Panc1 (cell line): ENCODE measurements at regions of chr2 and their contacts with region 1.

Region 1: DNA sequence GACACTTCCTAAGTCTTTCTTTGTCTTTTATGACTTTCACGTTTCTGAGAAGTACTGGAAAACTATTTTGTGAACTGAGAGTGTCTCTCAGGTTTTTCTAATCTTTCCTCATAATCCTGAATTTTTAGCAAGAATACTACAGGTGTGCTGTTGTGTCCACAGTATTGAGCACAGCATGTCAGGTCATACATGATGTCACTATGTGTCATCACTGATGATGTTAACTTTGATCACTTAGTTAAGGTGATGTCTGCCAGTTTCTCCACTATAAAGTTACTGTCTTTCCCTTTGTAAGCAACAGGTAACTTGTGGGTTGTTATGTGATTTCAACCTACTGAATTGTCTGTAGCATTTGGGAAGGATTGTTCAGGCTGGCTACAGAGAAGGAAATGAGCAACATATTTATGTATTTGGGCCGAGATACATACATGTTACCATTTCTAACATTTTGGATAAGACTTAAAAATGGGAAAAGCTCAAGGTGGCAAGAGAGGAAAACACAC is 11.1 kb downstream of the MATN3 start:
- DNase-seq: no peak
- ATAC-seq: no peak
- H3K4me3 ChIP-seq: no peak overlapping the region
- H3K27ac ChIP-seq: no peak overlapping the region
- H3K4me1 ChIP-seq: no peaks in the 10 kb centered on the region
- H3K27me3 ChIP-seq: no peaks in the 10 kb centered on the region
- CTCF ChIP-seq: no peak

Region 2: DNA sequence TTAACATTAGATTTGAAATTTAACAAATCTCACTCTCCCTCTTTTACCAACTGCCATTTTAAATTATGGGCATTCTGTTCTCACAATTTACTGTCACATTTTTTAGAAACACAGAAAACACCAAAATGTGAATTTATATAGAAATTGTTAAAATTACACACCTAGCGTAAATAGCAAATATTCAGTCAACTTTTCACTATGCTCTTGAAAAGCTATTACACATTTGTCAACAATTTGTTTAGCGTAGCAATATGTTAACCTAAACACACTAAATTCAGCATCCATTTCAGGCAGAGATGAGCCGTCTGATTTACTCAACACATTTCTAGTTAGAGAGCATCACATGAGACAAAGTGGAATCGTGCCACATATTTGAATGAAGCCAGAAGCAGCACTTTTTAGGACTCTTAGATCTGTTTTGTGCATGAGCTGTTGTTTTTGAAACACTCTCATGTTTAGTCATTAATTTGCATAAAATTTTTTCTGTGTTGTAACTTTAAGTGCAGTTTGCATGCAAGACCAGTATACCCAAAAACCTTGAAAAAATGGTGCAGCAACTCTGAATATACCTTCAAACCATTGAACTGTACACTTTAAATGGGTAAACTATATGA is 107.8 kb before region 1 on chr2:
- CTCF ChIA-PET with region 1: no interaction called
- POLR2A ChIA-PET with region 1: no interaction called
- in situ Hi-C with region 1: no loop called
- intact Hi-C with region 1: no loop called
- DNase-seq: no peak
- ATAC-seq: no peak
- H3K4me3 ChIP-seq: no peak overlapping the region
- H3K27ac ChIP-seq: no peak overlapping the region
- H3K4me1 ChIP-seq: peaks cover 23% of the 10 kb centered on the region
- H3K27me3 ChIP-seq: no peaks in the 10 kb centered on the region
- CTCF ChIP-seq: no peak

Region 3: GRCh38 chr2:19911799-19912509 is 89.5 kb before region 1 on chr2:
- CTCF ChIA-PET with region 1: no interaction called
- POLR2A ChIA-PET with region 1: no interaction called
- in situ Hi-C with region 1: no loop called
- intact Hi-C with region 1: no loop called
- DNase-seq: peak; percentile 96
- ATAC-seq: peak; percentile 97
- H3K4me3 ChIP-seq: 0 out of 4 replicates have a peak overlapping the region, but pooled peaks of 1 of the 2 experiments have one; percentile 6
- H3K27ac ChIP-seq: peak overlapping the region; percentile 78
- H3K4me1 ChIP-seq: peaks cover 19% of the 10 kb centered on the region
- H3K27me3 ChIP-seq: no peaks in the 10 kb centered on the region
- CTCF ChIP-seq: no peak

Region 4: GRCh38 chr2:21146638-21147037 is 1145.2 kb after region 1 on chr2:
- CTCF ChIA-PET with region 1: no interaction called
- POLR2A ChIA-PET with region 1: interaction called, 13 read pairs
- in situ Hi-C with region 1: no loop called
- intact Hi-C with region 1: no loop called
- DNase-seq: no peak
- ATAC-seq: no peak
- H3K4me3 ChIP-seq: no peak overlapping the region
- H3K27ac ChIP-seq: no peak overlapping the region
- H3K4me1 ChIP-seq: no peaks in the 10 kb centered on the region
- H3K27me3 ChIP-seq: no peaks in the 10 kb centered on the region
- CTCF ChIP-seq: no peak